Activated CD8-positive, alpha-beta memory T cell treated with anti-CD3 and anti-CD28 coated beads, Interleukin-2, amount 10 ng/mL, durations not matched to agents 7 days and 5 days (primary cell): ENCODE measurements at regions of chr20 and their contacts with region 1.

Region 1: GRCh38 chr20:9912858-9913434 is 74.1 kb upstream of the PAK5 start:
- DNase-seq: peak; percentile 44
- ATAC-seq: no peak
- H3K4me3 Mint-ChIP-seq: no peak overlapping the region
- H3K27ac Mint-ChIP-seq: no peak overlapping the region
- H3K4me1 Mint-ChIP-seq: no peaks in the 10 kb centered on the region
- H3K27me3 Mint-ChIP-seq: peaks cover 15% of the 10 kb centered on the region

Region 2: DNA sequence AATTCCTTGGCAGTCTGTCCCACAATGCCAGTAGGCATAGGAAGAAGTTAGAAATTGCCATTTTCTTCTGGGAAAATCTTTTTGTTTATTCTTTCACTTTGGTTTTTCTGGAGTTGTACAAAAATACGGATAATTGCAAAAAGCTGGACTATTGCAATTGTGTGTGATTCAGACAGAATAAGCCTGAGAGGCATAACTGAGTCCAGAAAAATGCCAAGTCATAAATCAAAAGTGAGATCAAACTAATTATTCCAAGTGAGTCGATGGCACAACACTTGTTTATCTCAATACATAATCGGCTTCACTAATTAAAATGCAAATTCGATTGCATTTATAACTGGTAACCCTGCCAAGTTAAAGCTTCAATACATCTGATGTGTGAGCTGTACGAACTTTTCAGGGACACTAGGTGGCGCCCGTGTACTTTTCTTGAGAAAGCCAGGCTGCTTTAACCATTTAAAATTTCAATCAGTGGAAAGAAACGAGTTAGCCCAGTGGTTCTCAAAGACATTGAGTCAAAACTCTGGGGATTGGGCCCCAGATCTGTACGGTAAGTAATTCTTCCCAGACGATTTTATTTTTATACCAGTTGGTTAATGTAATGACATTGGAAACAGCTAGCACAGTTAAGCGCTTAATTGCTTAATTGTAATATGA is 296.0 kb before region 1 on chr20:
- CTCF ChIA-PET with region 1: interaction called, 32 read pairs
- DNase-seq: peak; percentile 65
- ATAC-seq: peak; percentile 45
- H3K4me3 Mint-ChIP-seq: no peak overlapping the region
- H3K27ac Mint-ChIP-seq: no peak overlapping the region
- H3K4me1 Mint-ChIP-seq: no peaks in the 10 kb centered on the region
- H3K27me3 Mint-ChIP-seq: no peaks in the 10 kb centered on the region